Activated T-helper 2 cell treated with anti-CD3 and anti-CD28 coated beads, Interferon-gamma antibody, Interleukin-2, Interleukin-4, amounts not matched to agents 10 μg/mL and 5 μg/mL and 100 μg/mL, durations not matched to agents 14 hours and 24 hours and 36 hours (primary cell): ENCODE measurements at regions of chr5 and their contacts with region 1.

Region 1: DNA sequence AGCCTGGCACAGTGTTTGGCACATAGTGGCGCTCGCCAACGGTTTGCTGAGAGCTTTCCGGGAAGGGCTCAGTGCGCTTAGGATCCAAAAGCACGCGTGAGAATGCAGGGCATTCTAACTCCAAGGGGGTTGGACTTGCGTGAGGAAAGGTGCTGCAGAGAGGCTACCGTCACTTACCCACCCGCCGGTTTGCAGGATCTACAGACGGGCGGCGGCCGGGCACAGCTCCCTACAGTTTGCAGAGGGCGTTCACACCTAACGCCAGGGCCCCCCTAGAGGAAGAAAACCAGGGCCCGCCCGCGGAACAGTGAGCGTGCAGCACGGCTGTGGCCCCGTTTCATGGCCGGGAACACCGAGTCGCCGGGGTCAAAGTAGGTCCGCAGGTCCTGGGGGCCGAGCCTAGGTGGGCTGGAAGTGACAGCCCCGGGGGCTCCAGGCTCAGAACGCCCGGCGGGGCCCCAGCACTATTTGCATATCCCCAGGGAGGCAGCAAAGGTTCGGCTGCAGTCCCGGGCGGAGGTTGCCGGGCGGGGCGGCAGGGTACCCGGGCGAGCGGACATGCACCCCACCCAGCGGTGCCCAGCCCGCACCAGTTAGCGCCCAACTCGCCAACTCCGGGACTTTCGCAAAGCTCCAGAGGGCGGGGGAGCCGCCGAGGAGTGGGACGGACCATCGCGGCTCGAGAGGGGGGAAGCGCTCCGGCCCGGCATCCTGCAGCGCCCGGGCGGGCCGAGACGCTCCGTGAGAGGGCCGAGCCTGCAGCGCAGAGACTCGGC is 526 bp upstream of the GALNT10 start:
- DNase-seq: peak; percentile 76
- H3K4me3 Mint-ChIP-seq: peak overlapping the region; percentile 83
- H3K27ac Mint-ChIP-seq: peak overlapping the region; percentile 60
- H3K4me1 Mint-ChIP-seq: peaks cover 37% of the 10 kb centered on the region
- H3K27me3 Mint-ChIP-seq: peaks cover 17% of the 10 kb centered on the region

Region 2: GRCh38 chr5:154072414-154073171 is 117.4 kb before region 1 on chr5:
- intact Hi-C with region 1: loop called (anchors 2 kb)
- DNase-seq: peak; percentile 77
- H3K4me3 Mint-ChIP-seq: no peak overlapping the region
- H3K27ac Mint-ChIP-seq: peak overlapping the region; percentile 54
- H3K4me1 Mint-ChIP-seq: peaks cover 51% of the 10 kb centered on the region
- H3K27me3 Mint-ChIP-seq: peaks cover 6% of the 10 kb centered on the region

Region 3: DNA sequence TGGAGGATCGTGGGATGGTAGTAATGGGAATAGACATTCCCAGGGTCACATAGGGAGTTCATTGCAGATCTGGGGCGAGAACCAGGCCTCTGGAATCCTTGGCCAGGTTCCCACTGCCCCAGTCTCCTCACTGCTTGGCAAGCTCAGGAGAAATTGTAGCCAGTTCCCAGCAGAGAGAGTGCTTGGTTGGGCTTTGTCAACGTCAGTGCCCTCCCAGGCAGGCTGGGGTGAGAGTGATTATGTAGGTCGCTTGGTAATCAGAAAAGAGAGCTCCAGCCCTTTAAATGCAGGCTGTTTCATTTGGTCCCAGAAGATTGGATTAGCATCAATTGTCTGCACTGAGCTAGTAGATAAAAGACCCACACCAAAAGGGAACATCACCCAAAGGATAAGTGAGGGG is 51.3 kb before region 1 on chr5:
- intact Hi-C with region 1: no loop called
- DNase-seq: no peak
- H3K4me3 Mint-ChIP-seq: no peak overlapping the region
- H3K27ac Mint-ChIP-seq: no peak overlapping the region
- H3K4me1 Mint-ChIP-seq: no peaks in the 10 kb centered on the region
- H3K27me3 Mint-ChIP-seq: peaks cover 2% of the 10 kb centered on the region

Region 4: DNA sequence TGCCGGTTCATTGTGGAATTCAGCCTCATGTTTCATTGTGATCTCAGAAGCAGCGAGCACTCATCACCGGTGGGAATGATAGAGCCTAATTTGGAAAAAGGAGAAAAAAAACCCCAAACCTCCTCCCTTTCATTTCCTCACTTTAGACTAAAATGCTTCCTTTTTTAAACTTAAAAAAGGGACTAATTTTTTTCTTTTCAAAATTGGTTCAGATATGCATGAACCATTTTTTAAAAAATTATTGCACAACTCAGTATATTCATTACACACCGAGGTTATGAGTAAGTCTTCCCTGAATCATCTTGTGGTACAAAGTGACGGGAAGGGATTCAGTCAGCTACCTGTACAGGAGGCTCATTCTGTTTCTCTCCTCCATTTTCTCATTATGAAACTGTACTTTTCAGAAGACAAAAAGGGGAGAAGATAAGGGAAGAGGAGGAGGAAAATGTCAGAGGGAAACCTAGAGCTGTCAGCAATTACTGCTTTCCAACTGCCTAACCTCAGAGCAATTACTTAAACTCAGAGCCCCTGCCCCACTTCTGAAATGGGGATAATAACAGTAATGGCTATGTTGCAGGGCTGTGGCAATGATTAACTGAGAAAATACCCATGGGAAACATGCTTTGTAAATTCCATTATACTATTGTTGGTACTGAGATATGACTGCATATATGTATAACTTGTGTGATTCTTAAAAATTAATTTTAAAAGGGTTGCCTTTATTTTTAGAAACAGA is 24.5 kb after region 1 on chr5:
- intact Hi-C with region 1: loop called (anchors 1 kb)
- DNase-seq: no peak
- H3K4me3 Mint-ChIP-seq: peak overlapping the region; percentile 9
- H3K27ac Mint-ChIP-seq: peak overlapping the region; percentile 83
- H3K4me1 Mint-ChIP-seq: peaks cover 43% of the 10 kb centered on the region
- H3K27me3 Mint-ChIP-seq: no peaks in the 10 kb centered on the region

Region 5: GRCh38 chr5:154311362-154311761 is 121.4 kb after region 1 on chr5:
- intact Hi-C with region 1: loop called (anchors 10 kb)
- DNase-seq: no peak
- H3K4me3 Mint-ChIP-seq: no peak overlapping the region
- H3K27ac Mint-ChIP-seq: no peak overlapping the region
- H3K4me1 Mint-ChIP-seq: peaks cover 25% of the 10 kb centered on the region
- H3K27me3 Mint-ChIP-seq: no peaks in the 10 kb centered on the region

Region 6: GRCh38 chr5:154754460-154755360 is 564.7 kb after region 1 on chr5:
- intact Hi-C with region 1: loop called (anchors 10 kb)
- DNase-seq: peak; percentile 99
- H3K4me3 Mint-ChIP-seq: peak overlapping the region; percentile 84
- H3K27ac Mint-ChIP-seq: peak overlapping the region; percentile 97
- H3K4me1 Mint-ChIP-seq: peaks cover 34% of the 10 kb centered on the region
- H3K27me3 Mint-ChIP-seq: no peaks in the 10 kb centered on the region